Left cardiac atrium (tissue), 4 donors: ENCODE measurements at regions of chr16 and their contacts with region 1.

Region 1: DNA sequence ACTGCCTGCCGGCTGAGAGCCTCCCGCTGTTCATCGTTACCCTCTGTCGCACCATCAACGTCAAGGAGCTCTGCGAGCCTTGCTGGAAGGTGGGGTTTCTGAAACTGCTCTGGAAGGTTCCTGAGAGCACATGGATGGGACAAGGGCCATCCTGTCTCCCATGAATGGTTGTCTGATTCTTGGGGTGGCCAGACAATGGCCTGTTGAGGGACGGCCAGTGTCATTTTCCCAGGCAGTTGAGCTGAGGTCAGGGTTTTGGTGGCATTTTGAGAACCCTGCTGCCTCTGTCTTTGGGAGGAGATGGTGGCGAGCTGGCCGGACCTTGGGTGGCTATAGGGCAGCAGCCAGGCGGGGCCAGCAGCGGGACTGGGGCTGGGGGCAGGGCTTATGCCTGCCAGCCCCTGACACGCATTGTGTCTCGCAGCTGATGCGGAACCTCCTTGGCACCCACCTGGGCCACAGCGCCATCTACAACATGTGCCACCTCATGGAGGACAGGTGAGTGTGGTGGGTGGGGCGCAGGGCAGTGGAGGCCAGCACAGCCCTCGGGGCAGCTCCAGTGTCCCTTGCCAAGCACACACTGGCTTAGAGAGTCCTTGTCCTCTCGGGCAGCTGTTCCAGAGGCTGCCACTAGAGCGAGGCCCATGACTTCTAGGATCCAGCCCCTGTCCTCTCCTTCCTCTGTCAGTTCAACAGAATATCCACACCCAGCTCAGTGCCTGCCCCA is 9.1 kb downstream of the TSC2 start:
- DNase-seq: no peak
- ATAC-seq: no peak

Region 2: GRCh38 chr16:2102471-2102870 is 45.6 kb after region 1 on chr16:
- intact Hi-C with region 1: loop called in 1 of 2 experiments (anchors 10 kb)
- DNase-seq: no peak
- ATAC-seq: no peak